Activated B cell treated with CpG ODN at 0.5 μM for 24 hours (primary cell): ENCODE measurements at regions of chr6 and their contacts with region 1.

Region 1: GRCh38 chr6:157667211-157668008 is 155.6 kb upstream of the SNX9 start:
- DNase-seq: no peak
- ATAC-seq: peak; percentile 84
- H3K4me3 Mint-ChIP-seq: peak overlapping the region; percentile 48
- H3K27ac Mint-ChIP-seq: peak overlapping the region; percentile 33
- H3K4me1 Mint-ChIP-seq: peaks cover 10% of the 10 kb centered on the region
- H3K27me3 Mint-ChIP-seq: no peaks in the 10 kb centered on the region
- CTCF ChIP-seq: peak; percentile 72

Region 2: DNA sequence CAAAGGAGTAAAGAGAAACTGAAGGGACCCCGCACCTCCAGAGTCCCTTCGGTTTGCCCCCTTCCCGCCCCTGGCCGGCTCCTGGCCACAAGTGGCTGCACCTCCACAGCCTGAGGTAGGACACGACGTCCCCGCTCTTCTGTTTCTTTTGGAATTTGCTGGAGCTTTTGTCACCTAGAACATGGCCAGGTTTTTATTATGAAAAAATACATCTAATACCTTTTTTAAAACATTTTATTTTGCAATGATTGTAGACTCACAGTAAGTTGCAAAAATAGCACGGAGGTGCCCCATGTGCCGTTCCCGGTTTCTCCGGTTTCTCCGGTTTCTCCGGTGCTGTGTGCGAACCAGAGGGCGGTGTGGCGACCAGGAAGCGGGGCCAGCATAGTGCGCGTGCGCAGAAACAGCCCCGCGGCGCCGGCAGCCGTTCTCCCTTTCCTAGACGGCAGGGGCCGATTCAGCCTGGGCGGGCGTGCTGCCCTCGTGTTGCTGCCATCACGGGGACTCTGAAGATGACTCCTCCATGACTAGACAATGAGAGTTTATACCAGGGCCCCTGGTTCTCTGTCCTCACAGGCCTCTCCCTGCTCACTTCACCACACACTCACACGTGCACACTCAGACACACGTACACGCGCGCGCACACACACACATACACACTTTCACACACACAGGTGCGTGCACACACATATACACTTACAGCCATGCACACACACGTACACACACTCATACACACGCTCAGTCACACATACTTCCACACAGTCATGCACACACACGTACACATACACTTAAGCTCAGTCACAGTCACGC is 446.2 kb before region 1 on chr6:
- CTCF ChIA-PET with region 1: no interaction called
- POLR2A ChIA-PET with region 1: no interaction called
- intact Hi-C with region 1: loop called (anchors 5 kb)
- DNase-seq: peak; percentile 75
- ATAC-seq: peak; percentile 61
- H3K4me3 Mint-ChIP-seq: peak overlapping the region; percentile 77
- H3K27ac Mint-ChIP-seq: peak overlapping the region; percentile 15
- H3K4me1 Mint-ChIP-seq: peaks cover 44% of the 10 kb centered on the region
- H3K27me3 Mint-ChIP-seq: no peaks in the 10 kb centered on the region
- CTCF ChIP-seq: no peak

Region 3: DNA sequence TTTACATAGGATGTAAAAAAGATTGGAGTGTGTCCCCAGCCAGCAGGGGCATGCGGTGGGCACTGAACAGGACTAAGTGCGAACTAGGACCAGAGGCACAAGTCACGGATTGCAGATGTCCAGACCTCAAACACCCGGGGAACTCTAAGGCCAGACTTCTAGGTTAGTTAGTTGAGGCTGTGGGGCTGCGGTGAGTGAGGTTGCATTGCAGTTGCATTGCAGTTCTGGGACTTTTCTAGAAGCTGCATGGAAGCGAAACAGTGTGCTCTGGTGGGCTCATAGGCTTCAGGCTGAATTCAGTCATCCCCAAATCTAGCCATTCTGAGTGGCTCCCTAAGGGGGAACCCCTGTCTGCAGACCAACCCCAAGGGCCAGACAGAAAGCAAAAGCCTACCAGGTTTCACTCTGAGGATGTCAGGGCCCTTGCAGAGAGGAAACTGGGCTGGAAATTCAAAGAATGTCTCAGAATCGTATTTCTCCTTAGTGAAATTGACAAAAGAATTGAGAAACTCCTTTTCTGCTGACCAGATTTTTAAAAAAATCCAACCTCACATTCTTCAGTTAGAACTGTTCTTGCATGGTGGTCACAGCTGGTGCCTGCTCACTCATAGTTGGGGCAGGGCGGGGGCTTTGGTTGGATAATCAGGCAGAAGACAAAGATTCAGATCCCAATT is 103.7 kb before region 1 on chr6:
- CTCF ChIA-PET with region 1: interaction called, 8 read pairs
- POLR2A ChIA-PET with region 1: interaction called, 3 read pairs
- intact Hi-C with region 1: loop called (anchors 2 kb)
- DNase-seq: no peak
- ATAC-seq: peak; percentile 69
- H3K4me3 Mint-ChIP-seq: peak overlapping the region; percentile 44
- H3K27ac Mint-ChIP-seq: peak overlapping the region; percentile 80
- H3K4me1 Mint-ChIP-seq: peaks cover 92% of the 10 kb centered on the region
- H3K27me3 Mint-ChIP-seq: no peaks in the 10 kb centered on the region
- CTCF ChIP-seq: no peak

Region 4: GRCh38 chr6:157756708-157757429 is 89.5 kb after region 1 on chr6:
- CTCF ChIA-PET with region 1: interaction called, 18 read pairs
- POLR2A ChIA-PET with region 1: no interaction called
- intact Hi-C with region 1: no loop called
- DNase-seq: peak; percentile 72
- ATAC-seq: peak; percentile 54
- H3K4me3 Mint-ChIP-seq: peak overlapping the region; percentile 38
- H3K27ac Mint-ChIP-seq: no peak overlapping the region
- H3K4me1 Mint-ChIP-seq: peaks cover 69% of the 10 kb centered on the region
- H3K27me3 Mint-ChIP-seq: peaks cover 6% of the 10 kb centered on the region
- CTCF ChIP-seq: peak; percentile 60

Region 5: GRCh38 chr6:157946865-157947532 is 279.6 kb after region 1 on chr6:
- CTCF ChIA-PET with region 1: interaction called, 4 read pairs
- POLR2A ChIA-PET with region 1: no interaction called
- intact Hi-C with region 1: loop called (anchors 5 kb)
- DNase-seq: no peak
- ATAC-seq: peak; percentile 42
- H3K4me3 Mint-ChIP-seq: no peak overlapping the region
- H3K27ac Mint-ChIP-seq: no peak overlapping the region
- H3K4me1 Mint-ChIP-seq: peaks cover 7% of the 10 kb centered on the region
- H3K27me3 Mint-ChIP-seq: no peaks in the 10 kb centered on the region
- CTCF ChIP-seq: no peak